Mammary epithelial cell (primary cell): ENCODE measurements at regions of chr11 and their contacts with region 1.

Region 1: GRCh38 chr11:75204685-75205563 is 35.6 kb upstream of the TPBGL start:
- DNase-seq: peak; percentile 72
- H3K4me3 ChIP-seq: no peak overlapping the region
- H3K27ac ChIP-seq: no peak overlapping the region
- H3K4me1 ChIP-seq: no peaks in the 10 kb centered on the region
- H3K27me3 ChIP-seq: no peaks in the 10 kb centered on the region
- CTCF ChIP-seq: peak; percentile 85 to 92

Region 2: GRCh38 chr11:75147875-75148263 is 57.1 kb before region 1 on chr11:
- CTCF ChIA-PET with region 1: interaction called, 11 read pairs
- dilution Hi-C with region 1: loop called (anchors 5 kb)
- in situ Hi-C with region 1: loop called (anchors 5 to 10 kb)
- intact Hi-C with region 1: loop called (anchors 1 kb)
- DNase-seq: no peak
- H3K4me3 ChIP-seq: no peak overlapping the region
- H3K27ac ChIP-seq: no peak overlapping the region
- H3K4me1 ChIP-seq: peaks cover 8% of the 10 kb centered on the region
- H3K27me3 ChIP-seq: no peaks in the 10 kb centered on the region
- CTCF ChIP-seq: no peak

Region 3: DNA sequence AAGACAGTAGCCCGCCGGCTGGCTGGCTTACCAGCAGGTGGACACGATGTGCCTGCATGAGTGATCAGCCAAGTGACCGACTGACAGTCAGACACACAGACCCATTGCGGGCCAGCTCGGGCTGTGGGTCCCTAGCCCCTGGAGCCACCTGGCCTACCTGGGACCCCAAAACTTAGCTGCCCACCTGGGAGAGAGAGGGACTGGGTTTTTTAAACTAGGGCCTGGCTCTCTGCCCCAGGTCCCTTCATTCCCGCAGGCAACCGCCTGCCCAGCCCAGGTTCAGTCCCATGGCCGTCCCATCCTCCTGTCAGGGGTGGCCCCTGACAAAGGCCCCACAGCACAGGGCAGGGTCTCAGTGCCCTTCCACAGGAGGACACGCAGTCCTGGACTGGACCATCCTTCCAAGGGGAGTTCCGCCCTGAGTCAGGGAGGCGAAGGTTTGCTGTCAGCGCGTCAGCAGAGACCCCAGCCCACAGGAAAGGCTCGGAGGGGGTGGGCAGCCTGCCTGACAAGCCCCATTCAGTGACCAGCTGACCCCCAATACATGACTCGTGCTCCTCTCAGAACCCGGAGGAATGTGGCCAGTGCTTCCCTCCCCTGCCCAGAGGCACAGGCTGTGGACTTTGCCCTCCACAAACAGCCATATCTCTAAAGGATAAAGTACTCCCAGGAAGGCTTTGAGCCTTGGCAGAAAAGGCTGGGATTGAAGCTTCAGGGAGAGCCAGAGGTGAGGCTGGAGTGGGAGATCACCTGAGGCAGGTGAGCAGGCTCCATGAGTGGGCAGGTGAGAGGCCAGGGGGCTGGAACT is 45.6 kb before region 1 on chr11:
- CTCF ChIA-PET with region 1: no interaction called
- dilution Hi-C with region 1: no loop called
- in situ Hi-C with region 1: no loop called
- intact Hi-C with region 1: no loop called
- DNase-seq: no peak
- H3K4me3 ChIP-seq: no peak overlapping the region
- H3K27ac ChIP-seq: no peak overlapping the region
- H3K4me1 ChIP-seq: no peaks in the 10 kb centered on the region
- H3K27me3 ChIP-seq: no peaks in the 10 kb centered on the region
- CTCF ChIP-seq: no peak

Region 4: GRCh38 chr11:75248690-75249268 is 43.9 kb after region 1 on chr11:
- CTCF ChIA-PET with region 1: interaction called, 4 read pairs
- dilution Hi-C with region 1: no loop called
- in situ Hi-C with region 1: no loop called
- intact Hi-C with region 1: loop called (anchors 2 kb)
- DNase-seq: peak; percentile 70
- H3K4me3 ChIP-seq: no peak overlapping the region
- H3K27ac ChIP-seq: no peak overlapping the region
- H3K4me1 ChIP-seq: no peaks in the 10 kb centered on the region
- H3K27me3 ChIP-seq: no peaks in the 10 kb centered on the region
- CTCF ChIP-seq: peak; percentile 100

Region 5: DNA sequence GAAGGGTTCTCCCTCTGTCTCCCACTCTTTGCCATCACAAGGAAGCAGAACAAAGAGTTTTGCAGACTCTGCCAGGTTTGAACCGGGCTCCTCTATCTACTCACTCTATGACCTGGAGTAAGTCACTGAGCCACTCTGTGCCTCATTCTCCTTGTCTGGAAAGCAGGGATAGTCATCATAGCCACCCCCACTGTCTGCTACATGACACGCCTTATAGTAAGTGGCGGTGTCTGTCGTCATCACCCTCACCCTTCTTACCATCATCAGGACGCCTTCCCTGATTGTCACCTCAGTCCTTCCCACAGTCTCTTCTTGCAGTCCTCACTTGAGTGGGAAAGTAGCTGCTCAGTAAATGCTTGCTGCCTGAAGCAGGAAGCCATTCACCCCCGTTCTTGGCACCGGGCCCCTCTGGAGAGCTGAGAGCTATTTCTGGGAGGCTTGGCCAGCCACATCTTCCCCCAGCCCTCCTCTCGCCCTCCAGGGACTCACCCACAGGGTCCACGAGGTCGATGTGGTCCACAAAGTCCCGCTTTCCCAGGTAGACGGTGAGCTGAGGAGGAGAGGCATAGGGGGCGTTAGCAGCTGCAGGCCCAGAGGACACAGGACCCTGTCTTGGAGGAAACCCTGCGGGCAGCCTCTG is 82.0 kb after region 1 on chr11:
- CTCF ChIA-PET with region 1: no interaction called
- dilution Hi-C with region 1: no loop called
- in situ Hi-C with region 1: no loop called
- intact Hi-C with region 1: no loop called
- DNase-seq: no peak
- H3K4me3 ChIP-seq: no peak overlapping the region
- H3K27ac ChIP-seq: no peak overlapping the region
- H3K4me1 ChIP-seq: no peaks in the 10 kb centered on the region
- H3K27me3 ChIP-seq: no peaks in the 10 kb centered on the region
- CTCF ChIP-seq: no peak